WTC11 (cell line): ENCODE measurements at regions of chr1 and their contacts with region 1.

Region 1: DNA sequence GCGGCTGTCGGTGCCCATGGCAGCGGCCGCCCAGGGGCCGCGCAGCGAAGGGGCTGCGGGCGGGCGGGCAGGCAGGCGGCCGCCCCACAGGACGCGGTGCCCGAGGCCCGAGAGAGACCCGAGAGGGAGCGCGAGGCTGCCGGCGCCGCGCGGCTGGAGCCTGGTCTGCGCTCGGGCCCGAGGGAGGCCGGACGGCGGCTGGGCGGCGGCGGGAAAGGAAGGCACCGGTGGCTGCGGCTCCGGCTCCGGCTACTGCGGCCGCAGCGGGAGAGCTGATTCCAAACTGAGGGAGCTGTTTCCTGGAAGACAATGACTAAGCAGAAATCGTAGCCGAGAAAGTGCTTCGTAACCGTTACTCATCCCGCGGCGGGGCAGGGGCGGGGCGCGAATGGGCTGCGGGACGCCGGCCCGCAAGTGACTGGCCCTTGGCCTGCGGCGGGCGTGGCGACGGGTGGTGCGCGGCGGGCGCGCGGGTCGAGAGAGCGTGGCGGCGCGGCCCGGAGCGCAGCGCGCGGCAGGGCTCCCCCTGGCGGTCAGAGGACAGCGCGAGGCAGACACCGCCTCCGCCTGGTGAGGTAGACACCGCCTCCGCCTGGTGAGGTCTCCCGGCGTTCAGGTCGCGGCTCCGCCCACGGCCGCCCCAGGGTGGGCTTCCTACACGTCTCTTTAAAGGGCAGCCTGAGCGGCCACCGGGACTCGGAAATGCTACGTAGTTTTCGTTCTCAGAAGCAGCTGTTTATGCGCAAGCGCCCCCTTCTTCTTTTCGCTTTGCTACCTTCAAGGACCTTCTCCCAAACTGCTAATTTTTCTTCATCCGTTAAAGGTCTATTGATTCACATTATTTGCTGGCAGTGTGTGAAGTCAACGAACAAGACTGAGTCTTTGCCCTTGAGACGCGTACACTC is at the start of gene GCLM:
- DNase-seq: peak; percentile 93
- ATAC-seq: peak; percentile 93
- H3K4me3 Mint-ChIP-seq: peak within 1 kb of the TSS; percentile 82
- H3K27ac Mint-ChIP-seq: peak within 1 kb of the TSS; percentile 33; the same call in 1 of the 2 replicates
- H3K4me1 Mint-ChIP-seq: peaks cover 27% of the 10 kb centered on the region
- H3K27me3 Mint-ChIP-seq: peaks cover 22% of the 10 kb centered on the region
- CTCF ChIP-seq: peak; percentile 86
- total RNA-seq, gene GCLM: 10.8 to 14.1 TPM (median 11.5 TPM) in 3 replicates

Region 2: GRCh38 chr1:93919780-93920179 is 10.4 kb after region 1 on chr1:
- CTCF ChIA-PET with region 1: interaction called, 12 read pairs
- POLR2A ChIA-PET with region 1: no interaction called
- DNase-seq: no peak
- ATAC-seq: peak; percentile 94
- H3K4me3 Mint-ChIP-seq: no peak overlapping the region
- H3K27ac Mint-ChIP-seq: peak overlapping the region; percentile 91
- H3K4me1 Mint-ChIP-seq: peaks cover 16% of the 10 kb centered on the region
- H3K27me3 Mint-ChIP-seq: no peaks in the 10 kb centered on the region
- CTCF ChIP-seq: no peak

Region 3: GRCh38 chr1:93925206-93925605 is 15.8 kb after region 1 on chr1:
- CTCF ChIA-PET with region 1: interaction called, 12 read pairs
- POLR2A ChIA-PET with region 1: no interaction called
- DNase-seq: no peak
- ATAC-seq: no peak
- H3K4me3 Mint-ChIP-seq: no peak overlapping the region
- H3K27ac Mint-ChIP-seq: no peak overlapping the region
- H3K4me1 Mint-ChIP-seq: peaks cover 4% of the 10 kb centered on the region
- H3K27me3 Mint-ChIP-seq: no peaks in the 10 kb centered on the region; the same call in none of the 2 replicates
- CTCF ChIP-seq: no peak

Region 4: DNA sequence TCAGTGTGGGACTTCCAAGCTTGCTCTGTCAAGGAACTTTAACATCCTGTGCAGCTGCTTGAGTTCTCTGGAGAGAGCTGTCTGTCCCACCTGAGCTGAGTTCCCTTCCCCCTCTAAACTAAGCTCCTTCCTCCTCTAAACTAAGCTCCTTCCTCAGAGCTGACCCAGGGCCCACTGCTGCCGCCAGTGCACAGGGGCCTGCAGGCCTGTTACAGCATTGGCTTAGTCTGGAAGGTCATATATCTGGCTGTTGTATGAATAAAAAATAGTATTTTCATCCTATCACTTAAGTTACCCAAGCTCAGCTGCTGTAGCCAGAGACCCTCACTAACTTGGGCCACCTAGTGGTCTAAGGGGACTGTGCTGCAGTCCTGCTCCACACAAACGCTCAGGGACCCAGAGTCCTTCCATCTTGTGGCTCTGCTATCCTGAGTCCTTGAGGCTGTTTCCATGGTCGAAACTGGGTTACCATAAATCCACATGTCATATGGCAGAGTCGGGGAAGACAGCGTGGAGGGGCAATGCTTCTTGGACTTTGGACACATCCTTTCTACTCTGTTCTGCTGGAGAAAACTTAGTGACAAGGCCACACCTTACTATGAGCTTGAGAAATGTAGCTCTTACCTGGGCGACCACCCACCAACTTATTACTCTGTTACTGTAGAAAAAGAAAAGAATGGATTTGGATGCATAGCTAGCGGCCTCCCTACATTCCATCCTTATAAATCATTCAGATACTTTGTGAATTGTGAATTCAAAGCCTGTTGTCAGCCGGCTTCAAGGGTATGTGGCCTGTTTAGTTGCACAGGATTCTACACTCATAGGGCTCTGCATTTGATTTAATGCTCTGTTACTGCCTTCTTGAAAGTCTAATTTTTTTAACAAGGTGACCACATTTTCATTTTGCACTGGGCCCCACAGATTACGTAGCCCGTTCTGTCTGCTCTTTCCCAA is 71.2 kb after region 1 on chr1:
- CTCF ChIA-PET with region 1: interaction called, 21 read pairs
- POLR2A ChIA-PET with region 1: no interaction called
- DNase-seq: peak; percentile 45
- ATAC-seq: peak; percentile 95
- H3K4me3 Mint-ChIP-seq: no peak overlapping the region
- H3K27ac Mint-ChIP-seq: no peak overlapping the region
- H3K4me1 Mint-ChIP-seq: peaks cover 17% of the 10 kb centered on the region
- H3K27me3 Mint-ChIP-seq: no peaks in the 10 kb centered on the region
- CTCF ChIP-seq: peak; percentile 49